Endothelial cell of umbilical vein (primary cell): ENCODE measurements at regions of chrX and their contacts with region 1.

Region 1: GRCh38 chrX:45710081-45710801 is 509.6 kb upstream of the DIPK2B start:
- DNase-seq: peak; percentile 76
- H3K4me3 ChIP-seq: no peak overlapping the region
- H3K27ac ChIP-seq: peak overlapping the region; percentile 95
- H3K4me1 ChIP-seq: peaks cover 56% of the 10 kb centered on the region
- H3K27me3 ChIP-seq: no peaks in the 10 kb centered on the region
- CTCF ChIP-seq: no peak
- POLR2A ChIP-seq: peak; percentile 46

Region 2: GRCh38 chrX:45479835-45480422 is 230.3 kb before region 1 on chrX:
- CTCF ChIA-PET with region 1: no interaction called
- POLR2A ChIA-PET with region 1: interaction called, 3 read pairs
- dilution Hi-C with region 1: no loop called
- intact Hi-C with region 1: loop called (anchors 5 kb)
- DNase-seq: peak; percentile 79
- H3K4me3 ChIP-seq: no peak overlapping the region
- H3K27ac ChIP-seq: peak overlapping the region; percentile 98
- H3K4me1 ChIP-seq: peaks cover 26% of the 10 kb centered on the region
- H3K27me3 ChIP-seq: no peaks in the 10 kb centered on the region
- CTCF ChIP-seq: no peak
- POLR2A ChIP-seq: no peak

Region 3: GRCh38 chrX:45621376-45622041 is 88.7 kb before region 1 on chrX:
- CTCF ChIA-PET with region 1: interaction called, 5 read pairs
- POLR2A ChIA-PET with region 1: no interaction called
- dilution Hi-C with region 1: no loop called
- intact Hi-C with region 1: loop called (anchors 1 kb)
- DNase-seq: peak; percentile 54
- H3K4me3 ChIP-seq: no peak overlapping the region
- H3K27ac ChIP-seq: peak overlapping the region; percentile 75
- H3K4me1 ChIP-seq: peaks cover 22% of the 10 kb centered on the region
- H3K27me3 ChIP-seq: no peaks in the 10 kb centered on the region
- CTCF ChIP-seq: no peak
- POLR2A ChIP-seq: peak; percentile 30

Region 4: DNA sequence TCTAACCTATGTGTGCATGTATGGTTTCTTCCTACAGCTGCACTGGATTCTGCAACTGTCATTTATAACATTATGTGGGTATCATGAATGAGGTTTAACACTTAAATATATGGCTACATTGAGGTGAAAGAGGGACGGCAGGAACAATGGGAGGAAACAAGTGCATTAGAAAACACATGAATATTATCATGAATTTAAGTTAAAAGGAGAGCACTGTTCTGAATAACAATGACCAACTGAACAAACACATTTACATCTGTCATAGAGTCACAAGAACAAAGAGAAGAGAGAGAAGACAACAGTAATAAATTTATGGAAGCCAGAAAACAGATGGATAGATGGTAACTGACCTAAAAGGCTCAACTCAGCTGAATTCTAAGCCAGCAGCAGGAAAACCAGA is 17.5 kb after region 1 on chrX:
- CTCF ChIA-PET with region 1: interaction called, 4 read pairs
- POLR2A ChIA-PET with region 1: no interaction called
- dilution Hi-C with region 1: no loop called
- intact Hi-C with region 1: loop called (anchors 2 kb)
- DNase-seq: peak; percentile 57
- H3K4me3 ChIP-seq: no peak overlapping the region
- H3K27ac ChIP-seq: peak overlapping the region; percentile 42
- H3K4me1 ChIP-seq: peaks cover 17% of the 10 kb centered on the region
- H3K27me3 ChIP-seq: no peaks in the 10 kb centered on the region
- CTCF ChIP-seq: no peak
- POLR2A ChIP-seq: no peak

Region 5: GRCh38 chrX:45758319-45758718 is 48.1 kb after region 1 on chrX:
- CTCF ChIA-PET with region 1: interaction called, 5 read pairs
- POLR2A ChIA-PET with region 1: no interaction called
- dilution Hi-C with region 1: no loop called
- intact Hi-C with region 1: loop called (anchors 1 kb)
- DNase-seq: peak; percentile 86
- H3K4me3 ChIP-seq: peak overlapping the region in 1 of 3 experiments; percentile 23
- H3K27ac ChIP-seq: peak overlapping the region; percentile 94
- H3K4me1 ChIP-seq: peaks cover 90% of the 10 kb centered on the region
- H3K27me3 ChIP-seq: no peaks in the 10 kb centered on the region
- CTCF ChIP-seq: no peak
- POLR2A ChIP-seq: no peak

Region 6: DNA sequence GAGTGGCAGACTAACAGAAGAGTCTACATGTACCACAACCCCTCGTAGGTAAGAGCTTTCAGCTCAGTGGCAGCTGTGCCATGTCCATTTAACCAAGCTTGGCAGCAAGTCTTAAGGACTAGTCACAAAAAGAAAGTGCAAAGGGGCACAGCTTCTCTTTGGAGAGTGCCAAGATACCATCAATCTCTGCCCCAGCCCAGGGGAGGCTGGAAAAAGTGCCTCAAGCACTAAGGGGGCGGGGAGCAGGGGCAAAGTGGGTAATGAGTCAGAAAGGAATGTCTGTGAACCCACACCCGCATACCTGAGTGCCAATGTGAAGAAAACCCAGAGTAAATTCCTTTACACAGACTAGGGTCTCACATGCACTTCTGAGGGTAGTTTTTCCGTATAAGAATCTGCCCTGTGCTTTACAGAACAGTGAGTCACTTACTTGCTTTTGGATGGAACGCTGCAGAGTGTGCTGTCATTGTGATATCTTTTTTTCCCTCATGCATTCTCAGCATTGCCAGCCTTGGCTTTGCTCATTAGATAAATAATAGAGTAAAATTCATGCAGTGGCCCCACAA is 615.2 kb after region 1 on chrX:
- CTCF ChIA-PET with region 1: no interaction called
- POLR2A ChIA-PET with region 1: no interaction called
- dilution Hi-C with region 1: no loop called
- intact Hi-C with region 1: loop called (anchors 5 kb)
- DNase-seq: peak; percentile 69
- H3K4me3 ChIP-seq: no peak overlapping the region
- H3K27ac ChIP-seq: peak overlapping the region; percentile 98
- H3K4me1 ChIP-seq: peaks cover 36% of the 10 kb centered on the region
- H3K27me3 ChIP-seq: no peaks in the 10 kb centered on the region
- CTCF ChIP-seq: no peak
- POLR2A ChIP-seq: no peak